Lower leg skin (tissue), 4 donors: ENCODE measurements at regions of chr20 and their contacts with region 1.

Region 1: GRCh38 chr20:5691918-5692618 is 58.1 kb upstream of the SHLD1 start:
- DNase-seq: no peak
- H3K4me3 ChIP-seq: no peak overlapping the region
- CTCF ChIP-seq: no peak
- POLR2A ChIP-seq: no peak

Region 2: GRCh38 chr20:5718896-5719595 is 27.0 kb after region 1 on chr20:
- intact Hi-C with region 1: loop called (anchors 1 kb)
- DNase-seq: no peak
- H3K4me3 ChIP-seq: no peak overlapping the region
- CTCF ChIP-seq: no peak
- POLR2A ChIP-seq: no peak

Region 3: DNA sequence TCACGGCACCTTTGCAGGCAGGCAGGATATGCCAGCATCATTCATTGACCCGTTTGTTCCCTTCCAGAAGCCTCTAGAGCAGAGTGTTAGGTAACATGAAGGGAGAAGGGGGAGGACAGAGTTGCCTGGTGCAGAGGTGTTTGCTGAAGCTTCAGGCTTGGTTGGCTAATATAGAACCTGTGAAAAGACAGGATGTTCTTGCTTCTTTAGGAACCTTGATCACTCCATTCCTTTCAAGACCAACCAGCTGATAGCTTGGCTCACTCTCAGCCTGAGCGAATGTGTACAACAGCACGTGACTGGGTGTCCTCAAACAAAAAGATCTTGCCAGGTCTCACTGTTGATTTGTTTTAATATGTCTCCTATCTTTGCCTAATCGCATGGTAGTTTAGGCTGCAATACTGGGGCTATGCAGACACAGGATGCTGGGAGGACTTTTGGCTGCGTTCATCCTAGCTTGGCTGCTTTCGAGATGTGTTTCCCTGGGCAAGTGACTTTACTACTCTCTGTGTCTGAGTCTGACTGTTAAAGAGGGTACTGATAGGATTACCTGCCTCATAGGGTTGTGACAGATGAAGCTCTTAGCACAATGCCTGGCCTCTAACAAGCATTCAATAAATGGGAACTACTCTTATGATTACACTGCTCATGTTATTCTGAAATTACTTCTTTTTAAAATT is 74.2 kb after region 1 on chr20:
- intact Hi-C with region 1: no loop called
- DNase-seq: no peak
- H3K4me3 ChIP-seq: no peak overlapping the region
- CTCF ChIP-seq: no peak
- POLR2A ChIP-seq: no peak